IMR-90 (cell line): ENCODE measurements at regions of chr12 and their contacts with region 1.

Region 1: DNA sequence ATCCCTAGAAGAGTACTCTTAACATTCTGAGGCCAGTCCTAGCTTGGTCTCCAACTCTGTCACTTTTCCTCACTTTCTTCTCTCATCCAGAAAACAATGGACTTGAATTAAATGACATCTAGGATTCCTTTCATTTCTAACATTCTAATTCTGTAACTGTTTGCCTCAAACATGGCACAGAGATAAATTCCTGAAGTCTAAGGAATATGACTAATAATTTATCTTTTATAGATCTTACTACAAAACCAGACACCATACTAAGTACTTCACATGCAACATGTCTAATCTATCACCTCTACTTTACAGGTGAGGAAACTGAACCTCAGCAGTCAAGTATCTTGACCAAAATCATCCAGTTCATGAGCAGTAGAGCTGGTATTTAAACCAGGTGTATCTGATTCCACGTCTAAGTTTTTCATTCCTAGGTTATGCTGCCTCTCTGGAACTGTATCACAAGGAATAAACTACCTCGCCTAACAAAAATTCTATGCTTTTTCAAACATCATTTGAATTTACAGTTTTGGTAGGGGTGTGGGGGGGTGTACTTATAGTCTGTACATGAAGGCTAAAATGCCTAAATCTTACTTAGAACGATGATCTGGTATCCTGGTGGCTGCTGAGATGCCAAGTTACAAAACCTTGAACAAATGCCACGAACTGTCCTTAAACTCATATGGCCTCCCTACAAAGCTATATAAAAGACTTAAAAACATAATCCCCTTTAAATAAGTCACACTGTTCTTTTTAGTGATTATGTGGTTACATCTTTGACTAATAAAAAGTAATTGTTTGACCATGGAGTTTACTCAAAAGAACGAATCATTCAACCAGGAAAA is 41.6 kb downstream of the ATXN2 start:
- DNase-seq: peak; percentile 16
- ATAC-seq: peak; percentile 69
- H3K4me3 ChIP-seq: no peak overlapping the region
- H3K27ac ChIP-seq: no peak overlapping the region
- H3K4me1 ChIP-seq: peaks cover 9% of the 10 kb centered on the region
- H3K27me3 ChIP-seq: no peaks in the 10 kb centered on the region
- CTCF ChIP-seq: no peak
- POLR2A ChIP-seq: no peak
- RAD21 ChIP-seq: no peak

Region 2: GRCh38 chr12:110932046-110932445 is 625.4 kb before region 1 on chr12:
- CTCF ChIA-PET with region 1: no interaction called
- POLR2A ChIA-PET with region 1: no interaction called
- dilution Hi-C with region 1: no loop called
- in situ Hi-C with region 1: no loop called
- intact Hi-C with region 1: no loop called
- DNase-seq: no peak
- ATAC-seq: no peak
- H3K4me3 ChIP-seq: no peak overlapping the region
- H3K27ac ChIP-seq: no peak overlapping the region
- H3K4me1 ChIP-seq: no peaks in the 10 kb centered on the region
- H3K27me3 ChIP-seq: peaks cover 2% of the 10 kb centered on the region; the same call in 1 of the 2 replicates
- CTCF ChIP-seq: 0 out of 2 replicates have a peak, but pooled peaks have one; percentile 5
- POLR2A ChIP-seq: no peak
- RAD21 ChIP-seq: no peak

Region 3: DNA sequence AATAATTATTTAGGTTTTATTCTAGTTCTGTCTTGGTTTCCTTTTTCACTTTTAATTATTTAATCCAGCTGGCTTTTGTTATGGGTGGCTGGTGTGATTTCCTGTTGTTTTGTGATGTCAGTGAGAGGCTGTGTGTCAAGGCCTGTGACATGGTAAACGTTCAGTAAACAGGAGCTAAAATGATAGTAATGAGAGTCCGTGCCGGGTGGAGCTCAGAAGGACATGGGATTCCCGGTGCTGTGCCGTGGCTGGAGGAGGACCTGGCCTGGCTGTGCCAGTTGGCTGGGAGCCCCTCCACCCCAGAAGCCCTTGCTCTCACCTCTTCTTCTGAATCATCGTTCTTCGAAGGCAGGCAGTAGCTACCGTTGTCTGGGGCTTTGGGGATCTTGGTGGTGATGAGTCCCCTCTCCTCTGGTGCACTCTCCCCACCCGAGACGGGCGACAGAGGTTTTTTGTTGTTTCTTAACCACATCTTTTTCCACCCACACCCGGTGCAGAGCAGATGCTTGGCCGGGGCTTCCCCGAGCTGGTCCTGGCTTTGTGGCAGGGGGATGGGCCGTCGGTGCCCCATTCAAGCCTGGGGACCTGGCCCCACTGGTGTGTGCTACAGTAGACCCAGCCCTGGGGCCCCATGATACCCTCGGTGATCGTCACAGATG is 122.7 kb before region 1 on chr12:
- CTCF ChIA-PET with region 1: no interaction called
- POLR2A ChIA-PET with region 1: no interaction called
- dilution Hi-C with region 1: no loop called
- in situ Hi-C with region 1: no loop called
- intact Hi-C with region 1: no loop called
- DNase-seq: peak; percentile 62
- ATAC-seq: peak; percentile 25
- H3K4me3 ChIP-seq: no peak overlapping the region
- H3K27ac ChIP-seq: peak overlapping the region; percentile 51
- H3K4me1 ChIP-seq: peaks cover 36% of the 10 kb centered on the region
- H3K27me3 ChIP-seq: no peaks in the 10 kb centered on the region
- CTCF ChIP-seq: no peak
- POLR2A ChIP-seq: no peak
- RAD21 ChIP-seq: no peak

Region 4: GRCh38 chr12:111505601-111506036 is 51.9 kb before region 1 on chr12:
- CTCF ChIA-PET with region 1: no interaction called
- POLR2A ChIA-PET with region 1: no interaction called
- dilution Hi-C with region 1: no loop called
- in situ Hi-C with region 1: no loop called
- intact Hi-C with region 1: loop called (anchors 5 kb)
- DNase-seq: no peak
- ATAC-seq: no peak
- H3K4me3 ChIP-seq: no peak overlapping the region
- H3K27ac ChIP-seq: no peak overlapping the region
- H3K4me1 ChIP-seq: peaks cover 3% of the 10 kb centered on the region; the same call in 1 of the 2 replicates
- H3K27me3 ChIP-seq: no peaks in the 10 kb centered on the region
- CTCF ChIP-seq: no peak
- POLR2A ChIP-seq: no peak
- RAD21 ChIP-seq: no peak